Activated CD8-positive, alpha-beta memory T cell treated with anti-CD3 and anti-CD28 coated beads, Interleukin-2, amount 10 ng/mL, durations not matched to agents 7 days and 5 days (primary cell): ENCODE measurements at regions of chr11 and their contacts with region 1.

Region 1: DNA sequence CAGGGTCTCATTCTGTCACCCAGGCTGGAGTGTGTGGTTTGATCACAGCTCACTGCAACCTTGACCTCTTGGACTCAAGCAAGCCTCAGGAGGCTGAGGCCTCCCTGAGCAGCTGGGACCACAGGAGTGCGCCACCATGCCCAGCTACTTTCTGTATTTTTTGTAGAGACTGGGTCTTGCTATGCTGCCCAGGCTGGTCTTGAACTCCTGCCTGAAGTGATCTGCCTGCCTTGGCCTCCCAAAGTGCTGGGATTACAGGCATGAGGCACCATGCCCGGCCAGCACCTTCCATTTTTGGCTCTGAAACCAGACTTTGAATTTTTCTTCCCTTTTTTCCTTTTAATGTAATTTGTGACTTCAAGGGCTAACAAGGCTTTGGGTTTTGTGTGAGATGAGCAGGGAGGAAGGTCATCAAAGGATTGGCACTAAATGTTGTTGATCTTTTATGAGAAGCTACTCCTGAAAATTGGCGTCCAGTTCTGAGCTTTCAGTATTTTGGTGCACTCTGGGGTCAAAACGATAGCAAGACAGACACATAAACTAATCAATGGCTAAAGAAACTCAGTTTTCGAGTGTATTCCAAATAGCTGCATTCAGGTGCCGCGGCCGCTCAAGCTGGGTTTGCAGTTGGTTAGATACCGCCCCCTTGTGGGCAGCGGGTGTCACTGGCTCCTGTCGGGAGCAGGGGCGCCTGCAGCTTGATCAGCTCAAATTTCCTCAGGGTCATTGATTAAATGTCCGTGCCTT is 51.9 kb upstream of the CLMP start:
- DNase-seq: peak; percentile 89
- ATAC-seq: peak; percentile 92
- H3K4me3 Mint-ChIP-seq: no peak overlapping the region
- H3K27ac Mint-ChIP-seq: peak overlapping the region; percentile 18
- H3K4me1 Mint-ChIP-seq: peaks cover 9% of the 10 kb centered on the region
- H3K27me3 Mint-ChIP-seq: peaks cover 35% of the 10 kb centered on the region

Region 2: DNA sequence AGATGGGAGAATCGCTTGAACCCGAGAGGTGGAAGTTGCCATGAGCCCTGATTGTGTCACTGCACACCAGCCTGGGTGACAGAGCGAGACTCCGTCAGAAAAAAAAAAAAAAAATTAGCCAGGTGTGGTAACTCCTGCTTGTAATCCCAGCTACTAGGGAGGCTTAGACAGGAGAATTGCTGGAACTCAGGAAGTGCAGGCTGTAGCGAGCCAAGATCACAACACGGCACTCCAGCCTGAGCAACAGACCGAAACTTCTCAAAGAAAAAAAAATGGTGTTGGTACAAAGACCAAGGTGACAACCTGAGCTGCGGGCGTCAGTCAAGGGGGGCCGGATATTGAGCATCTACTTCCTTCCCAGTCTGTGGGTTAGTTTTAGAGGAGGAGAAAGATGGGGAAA is 136.6 kb before region 1 on chr11:
- CTCF ChIA-PET with region 1: interaction called, 161 read pairs
- DNase-seq: no peak
- ATAC-seq: no peak
- H3K4me3 Mint-ChIP-seq: no peak overlapping the region
- H3K27ac Mint-ChIP-seq: no peak overlapping the region
- H3K4me1 Mint-ChIP-seq: no peaks in the 10 kb centered on the region
- H3K27me3 Mint-ChIP-seq: peaks cover 11% of the 10 kb centered on the region

Region 3: DNA sequence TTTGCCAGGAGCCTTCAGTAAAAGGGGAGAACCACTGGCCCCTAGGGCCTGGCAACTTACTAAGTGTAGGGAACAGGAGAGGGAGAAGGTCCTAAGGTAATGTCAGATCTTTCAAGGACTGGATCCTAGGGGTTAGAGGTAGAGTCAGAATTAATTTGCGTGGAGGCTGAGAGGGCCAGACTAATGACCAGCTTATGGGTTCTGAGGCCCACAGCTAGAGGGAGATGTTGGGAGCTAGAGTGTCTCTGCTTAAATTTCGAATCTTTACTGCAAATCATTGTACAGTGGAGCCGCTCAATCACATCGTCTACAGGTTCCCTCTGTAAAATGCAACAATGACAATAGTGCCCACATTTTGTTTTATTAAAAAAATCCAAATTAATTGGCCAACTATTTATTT is 83.3 kb before region 1 on chr11:
- CTCF ChIA-PET with region 1: interaction called, 18 read pairs
- DNase-seq: no peak
- ATAC-seq: no peak
- H3K4me3 Mint-ChIP-seq: no peak overlapping the region
- H3K27ac Mint-ChIP-seq: no peak overlapping the region
- H3K4me1 Mint-ChIP-seq: peaks cover 9% of the 10 kb centered on the region
- H3K27me3 Mint-ChIP-seq: peaks cover 3% of the 10 kb centered on the region

Region 4: GRCh38 chr11:123235117-123235655 is 11.7 kb before region 1 on chr11:
- CTCF ChIA-PET with region 1: interaction called, 61 read pairs
- DNase-seq: no peak
- ATAC-seq: no peak
- H3K4me3 Mint-ChIP-seq: no peak overlapping the region
- H3K27ac Mint-ChIP-seq: no peak overlapping the region
- H3K4me1 Mint-ChIP-seq: peaks cover 35% of the 10 kb centered on the region
- H3K27me3 Mint-ChIP-seq: peaks cover 10% of the 10 kb centered on the region

Region 5: GRCh38 chr11:123330071-123330470 is 83.1 kb after region 1 on chr11:
- CTCF ChIA-PET with region 1: no interaction called
- DNase-seq: no peak
- ATAC-seq: no peak
- H3K4me3 Mint-ChIP-seq: no peak overlapping the region
- H3K27ac Mint-ChIP-seq: no peak overlapping the region
- H3K4me1 Mint-ChIP-seq: no peaks in the 10 kb centered on the region
- H3K27me3 Mint-ChIP-seq: peaks cover 16% of the 10 kb centered on the region

Region 6: DNA sequence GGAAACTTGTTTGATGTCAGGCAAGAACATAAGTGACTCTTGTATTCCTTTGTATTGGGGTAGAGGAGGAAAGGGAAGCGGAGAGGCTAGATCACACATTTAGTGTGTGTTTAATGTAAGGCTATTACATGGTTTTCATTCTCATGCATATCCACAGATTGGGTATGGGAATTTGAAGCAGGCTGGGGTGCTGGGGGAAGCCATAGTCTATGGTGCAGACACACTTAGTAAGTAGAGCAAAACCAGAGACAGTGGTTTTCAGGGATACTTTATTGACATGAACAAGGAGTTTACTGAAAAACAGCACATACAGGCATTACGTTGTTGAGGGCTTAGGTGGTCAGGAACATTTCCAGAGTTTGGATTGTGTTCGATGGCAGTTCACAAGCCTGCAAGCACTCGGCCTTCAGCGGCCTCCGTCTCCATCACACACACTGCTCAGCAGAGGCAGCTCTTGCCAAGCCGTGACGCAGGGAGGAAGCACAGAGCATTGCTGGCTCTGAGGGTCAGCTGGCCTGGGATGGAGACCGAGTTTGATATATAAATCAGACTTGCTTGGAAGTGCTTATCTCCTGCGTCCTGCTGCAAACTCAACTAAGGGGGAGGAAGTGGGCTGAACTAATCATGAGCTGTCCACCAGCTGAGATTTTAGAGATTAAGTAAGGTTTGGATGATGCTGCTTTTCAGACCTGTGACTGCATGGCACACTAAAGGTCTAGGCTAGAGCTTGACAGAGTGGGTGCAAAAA is 382.2 kb after region 1 on chr11:
- CTCF ChIA-PET with region 1: no interaction called
- DNase-seq: no peak
- ATAC-seq: no peak
- H3K4me3 Mint-ChIP-seq: no peak overlapping the region
- H3K27ac Mint-ChIP-seq: no peak overlapping the region
- H3K4me1 Mint-ChIP-seq: no peaks in the 10 kb centered on the region
- H3K27me3 Mint-ChIP-seq: peaks cover 11% of the 10 kb centered on the region